ENCODE measurements at regions of chr7 and their contacts with region 1.

Region 1: DNA sequence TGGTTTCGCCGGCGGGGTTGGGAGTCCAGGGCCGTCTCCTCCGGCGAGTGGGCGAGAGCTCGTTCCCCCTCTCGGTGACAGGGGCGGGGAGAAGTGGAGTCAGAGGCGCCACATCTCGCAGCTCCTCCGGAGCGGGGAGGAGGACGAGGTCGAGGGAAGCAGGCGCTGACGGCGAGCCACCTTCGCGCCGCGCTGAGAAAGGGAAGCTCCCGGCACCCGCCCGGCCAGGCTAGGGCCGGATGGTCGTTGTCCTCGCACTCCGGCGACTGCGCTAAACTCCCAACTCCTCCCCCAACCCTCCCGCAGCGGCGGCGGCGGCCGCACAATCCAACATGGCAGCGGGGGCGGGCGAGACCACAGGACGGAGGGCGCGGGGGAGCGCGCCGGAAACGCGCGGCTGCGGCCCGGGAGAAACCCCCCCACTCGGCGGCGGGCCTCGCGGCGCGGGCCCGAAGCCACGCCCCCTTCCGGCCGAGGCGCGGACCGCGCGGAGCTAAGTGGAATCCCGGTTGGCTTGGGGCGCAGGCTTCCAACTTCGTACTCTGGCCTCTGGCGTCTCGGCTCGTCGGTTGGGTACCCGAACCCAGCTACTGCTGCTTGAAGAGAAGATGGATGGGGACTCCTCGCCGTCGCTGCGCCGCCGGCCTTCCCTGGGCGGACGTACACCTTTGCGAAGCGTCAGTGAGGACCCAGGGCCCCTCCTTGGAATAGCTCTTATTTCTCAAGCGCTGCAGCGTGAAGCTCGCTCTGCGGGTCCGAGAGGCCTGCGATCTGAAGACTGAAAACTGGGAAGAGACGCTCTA is at the start of gene WASL:
- DNase-seq: peak; percentile 85 to 92 (median 91)
- H3K4me3 ChIP-seq: peak within 1 kb of the TSS; percentile 71 to 99 (median 94)
- H3K4me3 Mint-ChIP-seq: peak within 1 kb of the TSS; percentile 97 to 99
- H3K27ac ChIP-seq: peak within 1 kb of the TSS; percentile 97 to 100
- H3K27ac Mint-ChIP-seq: peak within 1 kb of the TSS; percentile 96 to 99 (median 98)
- H3K4me1 ChIP-seq: peaks cover 20 to 48% of the 10 kb centered on the region in 2 donors
- H3K4me1 Mint-ChIP-seq: peaks cover 44% of the 10 kb centered on the region
- H3K27me3 ChIP-seq: no peaks in the 10 kb centered on the region
- H3K27me3 Mint-ChIP-seq: peaks cover 0 to 2% (median 0%) of the 10 kb centered on the region in 3 donors
- CTCF ChIP-seq: no peak
- polyA plus RNA-seq, gene WASL: 1.6 to 3.9 (median 2.1) TPM

Region 2: GRCh38 chr7:123635551-123636359 is 113.2 kb before region 1 on chr7:
- intact Hi-C with region 1: no loop called
- DNase-seq: no peak
- H3K4me3 ChIP-seq: no peak overlapping the region
- H3K4me3 Mint-ChIP-seq: no peak overlapping the region
- H3K27ac ChIP-seq: no peak overlapping the region
- H3K27ac Mint-ChIP-seq: no peak overlapping the region
- H3K4me1 ChIP-seq: no peaks in the 10 kb centered on the region
- H3K4me1 Mint-ChIP-seq: no peaks in the 10 kb centered on the region
- H3K27me3 ChIP-seq: peaks cover 2 to 4% of the 10 kb centered on the region in 2 donors
- H3K27me3 Mint-ChIP-seq: peaks cover 3 to 9% (median 4%) of the 10 kb centered on the region in 3 donors
- CTCF ChIP-seq: peak; percentile 13

Region 3: GRCh38 chr7:123692471-123692877 is 56.5 kb before region 1 on chr7:
- intact Hi-C with region 1: loop called in 1 of 2 experiments (anchors 10 kb)
- DNase-seq: no peak
- H3K4me3 ChIP-seq: no peak overlapping the region
- H3K4me3 Mint-ChIP-seq: no peak overlapping the region
- H3K27ac ChIP-seq: no peak overlapping the region
- H3K27ac Mint-ChIP-seq: no peak overlapping the region
- H3K4me1 ChIP-seq: no peaks in the 10 kb centered on the region
- H3K4me1 Mint-ChIP-seq: no peaks in the 10 kb centered on the region
- H3K27me3 ChIP-seq: no peaks in the 10 kb centered on the region
- H3K27me3 Mint-ChIP-seq: no peaks in the 10 kb centered on the region
- CTCF ChIP-seq: no peak